GM12878 (cell line): ENCODE measurements at regions of chr5 and their contacts with region 1.

Region 1: DNA sequence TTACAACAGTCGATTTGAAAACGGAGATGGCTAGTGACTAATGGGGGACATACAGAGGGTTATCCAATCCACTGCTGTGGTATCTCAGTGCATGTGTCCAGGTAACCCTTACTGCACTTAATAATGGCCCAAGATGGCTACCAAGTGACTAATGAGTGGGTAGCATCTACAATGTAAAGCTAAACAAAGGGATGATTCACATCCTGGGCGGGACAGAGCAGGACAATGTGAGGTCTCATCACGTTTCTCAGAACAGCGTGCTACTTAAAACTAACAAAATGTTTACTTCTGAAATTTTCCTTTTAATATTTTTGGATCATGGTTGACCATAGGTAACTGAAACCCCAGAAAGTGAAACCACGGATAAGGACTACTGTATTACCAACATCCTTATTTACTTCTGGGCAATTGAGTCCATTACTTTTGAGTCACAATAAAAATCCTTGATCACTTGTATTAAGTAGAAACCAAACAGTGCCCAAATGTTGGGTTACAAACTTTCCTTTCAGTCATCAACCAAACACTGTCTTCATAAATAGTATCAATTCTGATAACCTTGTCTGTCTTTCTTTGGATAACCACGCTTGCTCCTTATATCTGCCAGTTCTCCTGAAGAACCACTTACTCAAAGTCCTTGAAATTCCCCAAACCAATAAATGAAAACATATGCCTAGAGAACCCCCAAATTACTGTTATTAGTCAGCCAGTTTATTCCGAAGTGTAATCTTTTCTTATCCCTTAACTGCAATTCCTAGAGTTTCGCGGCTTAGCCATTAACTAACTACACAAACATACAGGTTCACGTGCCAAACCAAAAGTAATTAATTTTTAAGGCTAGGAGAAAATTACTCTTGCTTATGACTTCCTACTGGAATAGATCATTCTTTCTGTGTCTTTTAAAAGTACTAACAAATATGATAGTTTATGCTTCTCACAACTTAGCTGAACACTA is 59.7 kb downstream of the ELL2 start:
- DNase-seq: no peak
- ATAC-seq: peak; percentile 42
- H3K4me3 ChIP-seq: no peak overlapping the region
- H3K27ac ChIP-seq: no peak overlapping the region
- H3K4me1 ChIP-seq: no peaks in the 10 kb centered on the region
- H3K27me3 ChIP-seq: no peaks in the 10 kb centered on the region
- CTCF ChIP-seq: no peak
- EP300 ChIP-seq: no peak
- POLR2A ChIP-seq: peak; percentile 41; the same call in 1 of the 2 replicates
- RAD21 ChIP-seq: no peak

Region 2: DNA sequence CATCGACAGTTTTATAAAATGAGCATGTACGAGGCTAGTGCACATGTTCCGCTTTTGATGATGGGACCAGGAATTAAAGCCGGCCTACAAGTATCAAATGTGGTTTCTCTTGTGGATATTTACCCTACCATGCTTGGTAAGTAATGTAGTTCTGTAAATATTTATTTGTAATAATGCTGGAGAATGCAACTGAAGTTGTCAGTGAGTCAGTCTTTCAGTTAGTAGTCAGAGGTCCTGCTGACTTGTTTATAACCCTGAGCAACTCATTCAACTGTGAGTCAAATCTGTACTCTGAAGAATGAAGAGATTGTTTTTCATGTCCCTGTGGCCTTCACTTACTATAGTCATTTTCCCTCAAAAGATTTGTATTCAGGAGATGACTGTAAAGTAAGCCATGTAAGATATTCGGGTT is 310.5 kb before region 1 on chr5:
- CTCF ChIA-PET with region 1: no interaction called
- POLR2A ChIA-PET with region 1: no interaction called
- RAD21 ChIA-PET with region 1: no interaction called
- SMC1A ChIA-PET with region 1: no interaction called
- in situ Hi-C with region 1: no loop called
- intact Hi-C with region 1: no loop called
- DNase-seq: no peak
- ATAC-seq: peak; percentile 91
- H3K4me3 ChIP-seq: no peak overlapping the region
- H3K27ac ChIP-seq: no peak overlapping the region
- H3K4me1 ChIP-seq: peaks cover 10% of the 10 kb centered on the region
- H3K27me3 ChIP-seq: no peaks in the 10 kb centered on the region
- CTCF ChIP-seq: no peak
- EP300 ChIP-seq: peak in 1 of 2 experiments; percentile 48; a peak in 1 of 4 replicates
- POLR2A ChIP-seq: no peak
- RAD21 ChIP-seq: no peak

Region 3: GRCh38 chr5:95712347-95712958 is 189.5 kb before region 1 on chr5:
- CTCF ChIA-PET with region 1: no interaction called
- POLR2A ChIA-PET with region 1: no interaction called
- RAD21 ChIA-PET with region 1: no interaction called
- SMC1A ChIA-PET with region 1: no interaction called
- in situ Hi-C with region 1: no loop called
- intact Hi-C with region 1: no loop called
- DNase-seq: no peak
- ATAC-seq: peak; percentile 13; the same call in 2 of the 3 replicates
- H3K4me3 ChIP-seq: no peak overlapping the region
- H3K27ac ChIP-seq: no peak overlapping the region
- H3K4me1 ChIP-seq: peaks cover 8% of the 10 kb centered on the region
- H3K27me3 ChIP-seq: no peaks in the 10 kb centered on the region
- CTCF ChIP-seq: no peak
- EP300 ChIP-seq: no peak
- POLR2A ChIP-seq: no peak
- RAD21 ChIP-seq: no peak

Region 4: DNA sequence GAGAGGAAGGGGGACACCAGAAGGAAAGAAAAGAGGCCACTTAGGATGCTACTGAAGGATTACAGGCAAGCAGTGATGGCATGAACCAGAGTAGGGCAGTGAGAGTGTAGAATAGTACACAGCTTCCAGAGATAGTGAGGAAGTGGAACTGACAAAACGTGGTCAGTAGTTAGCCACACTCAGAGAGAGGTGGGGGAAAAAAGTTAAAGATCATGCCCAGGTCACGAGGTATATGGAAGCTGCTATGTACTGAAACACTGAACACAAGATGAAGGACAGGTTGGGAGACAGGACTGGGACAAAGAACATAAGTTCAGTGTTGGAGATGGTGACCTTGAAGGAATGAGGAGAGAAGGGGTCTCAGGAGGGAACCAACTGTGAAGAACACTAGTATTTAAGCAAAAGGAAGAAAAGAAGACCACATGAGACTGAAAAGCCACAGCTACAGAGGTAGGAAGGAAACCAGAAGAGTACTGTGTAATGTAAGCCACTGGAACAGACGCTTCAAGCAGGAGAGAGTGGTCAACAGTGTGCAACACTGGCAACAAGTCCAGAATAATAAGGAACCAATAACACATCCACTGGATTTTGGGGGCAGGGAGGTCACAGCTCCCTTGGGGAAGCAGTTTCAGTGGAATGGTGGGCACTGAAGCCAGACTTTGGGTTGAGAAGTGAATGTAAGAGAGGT is 14.2 kb after region 1 on chr5:
- CTCF ChIA-PET with region 1: interaction called, 3 read pairs
- POLR2A ChIA-PET with region 1: interaction called, 5 read pairs
- RAD21 ChIA-PET with region 1: interaction called, 3 read pairs
- SMC1A ChIA-PET with region 1: interaction called, 55 read pairs
- in situ Hi-C with region 1: no loop called
- intact Hi-C with region 1: no loop called
- DNase-seq: no peak
- ATAC-seq: peak; percentile 79
- H3K4me3 ChIP-seq: no peak overlapping the region
- H3K27ac ChIP-seq: peak overlapping the region; percentile 20; the same call in 1 of the 2 replicates
- H3K4me1 ChIP-seq: peaks cover 38% of the 10 kb centered on the region
- H3K27me3 ChIP-seq: no peaks in the 10 kb centered on the region
- CTCF ChIP-seq: no peak
- EP300 ChIP-seq: no peak
- POLR2A ChIP-seq: no peak
- RAD21 ChIP-seq: no peak

Region 5: GRCh38 chr5:96112123-96112670 is 210.2 kb after region 1 on chr5:
- CTCF ChIA-PET with region 1: no interaction called
- POLR2A ChIA-PET with region 1: no interaction called
- RAD21 ChIA-PET with region 1: no interaction called
- SMC1A ChIA-PET with region 1: no interaction called
- in situ Hi-C with region 1: no loop called
- intact Hi-C with region 1: no loop called
- DNase-seq: no peak
- ATAC-seq: no peak
- H3K4me3 ChIP-seq: no peak overlapping the region
- H3K27ac ChIP-seq: no peak overlapping the region
- H3K4me1 ChIP-seq: no peaks in the 10 kb centered on the region
- H3K27me3 ChIP-seq: no peaks in the 10 kb centered on the region
- CTCF ChIP-seq: no peak
- EP300 ChIP-seq: no peak
- POLR2A ChIP-seq: no peak
- RAD21 ChIP-seq: no peak